Activated CD4-positive, alpha-beta T cell treated with anti-CD3 and anti-CD28 coated beads, Interleukin-2, amount 10 ng/mL, durations not matched to agents 24 days and 14 days (primary cell): ENCODE measurements at regions of chr2 and their contacts with region 1.

Region 1: GRCh38 chr2:98465456-98466226 is 21.0 kb downstream of the INPP4A start:
- DNase-seq: peak; percentile 93
- H3K4me3 Mint-ChIP-seq: peak overlapping the region; percentile 71
- H3K27ac Mint-ChIP-seq: peak overlapping the region; percentile 89
- H3K4me1 Mint-ChIP-seq: peaks cover 76% of the 10 kb centered on the region
- H3K27me3 Mint-ChIP-seq: no peaks in the 10 kb centered on the region

Region 2: GRCh38 chr2:98269274-98269673 is 196.4 kb before region 1 on chr2:
- intact Hi-C with region 1: no loop called
- DNase-seq: peak; percentile 72
- H3K4me3 Mint-ChIP-seq: no peak overlapping the region
- H3K27ac Mint-ChIP-seq: no peak overlapping the region
- H3K4me1 Mint-ChIP-seq: no peaks in the 10 kb centered on the region
- H3K27me3 Mint-ChIP-seq: peaks cover 6% of the 10 kb centered on the region

Region 3: DNA sequence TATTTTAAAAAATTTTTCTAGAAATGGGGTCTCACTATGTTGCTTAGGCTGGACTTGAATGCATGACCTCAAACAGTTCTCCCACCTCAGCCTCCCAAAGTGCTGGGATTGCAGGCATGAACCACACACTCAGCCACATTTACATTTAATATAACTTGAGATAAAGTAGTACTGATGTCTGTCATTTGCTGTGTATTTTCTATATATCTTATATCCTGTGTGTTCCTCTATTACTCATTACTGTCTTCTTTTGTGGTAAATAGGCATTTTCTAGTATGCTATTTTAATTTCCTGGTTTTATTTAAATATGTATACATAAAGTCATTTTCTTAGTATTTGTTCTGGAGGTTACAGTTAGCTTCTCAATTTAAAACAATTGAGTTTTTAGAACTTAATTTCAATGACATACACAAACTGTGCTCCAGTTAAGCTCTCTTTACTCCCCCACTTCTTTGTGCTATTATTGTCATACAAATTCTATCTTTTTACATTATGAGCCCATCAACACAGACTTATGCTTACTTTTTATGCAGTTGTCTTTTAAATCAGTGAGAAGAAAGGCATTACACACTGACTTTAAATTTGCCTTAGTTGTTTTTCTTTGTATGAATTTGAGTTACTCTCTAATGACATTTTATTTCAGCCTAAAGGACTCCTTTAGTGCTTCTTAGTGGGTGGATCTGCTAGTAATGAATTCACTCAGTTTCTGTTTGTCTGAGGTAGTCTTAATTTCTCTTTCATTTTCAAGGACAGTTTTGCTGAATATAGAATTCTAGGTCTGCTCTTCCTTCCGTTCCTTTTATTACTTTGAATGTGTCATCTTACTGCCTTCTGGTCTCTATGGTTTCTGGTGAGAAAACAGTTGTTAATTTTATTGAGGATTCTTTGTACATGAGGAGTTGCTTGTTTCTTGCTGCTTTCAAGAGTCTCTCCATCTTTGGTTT is 27.2 kb before region 1 on chr2:
- intact Hi-C with region 1: loop called (anchors 2 kb)
- DNase-seq: peak; percentile 64
- H3K4me3 Mint-ChIP-seq: peak overlapping the region; percentile 58
- H3K27ac Mint-ChIP-seq: peak overlapping the region; percentile 87
- H3K4me1 Mint-ChIP-seq: peaks cover 17% of the 10 kb centered on the region
- H3K27me3 Mint-ChIP-seq: no peaks in the 10 kb centered on the region

Region 4: GRCh38 chr2:98444436-98445176 is 21.0 kb before region 1 on chr2 and contains the start of gene INPP4A:
- intact Hi-C with region 1: loop called (anchors 1 kb)
- DNase-seq: peak; percentile 93
- H3K4me3 Mint-ChIP-seq: peak within 1 kb of the TSS; percentile 89
- H3K27ac Mint-ChIP-seq: peak within 1 kb of the TSS; percentile 91
- H3K4me1 Mint-ChIP-seq: peaks cover 37% of the 10 kb centered on the region
- H3K27me3 Mint-ChIP-seq: no peaks in the 10 kb centered on the region
- total RNA-seq, gene INPP4A: 40.2 and 45.0 TPM in 2 replicates

Region 5: DNA sequence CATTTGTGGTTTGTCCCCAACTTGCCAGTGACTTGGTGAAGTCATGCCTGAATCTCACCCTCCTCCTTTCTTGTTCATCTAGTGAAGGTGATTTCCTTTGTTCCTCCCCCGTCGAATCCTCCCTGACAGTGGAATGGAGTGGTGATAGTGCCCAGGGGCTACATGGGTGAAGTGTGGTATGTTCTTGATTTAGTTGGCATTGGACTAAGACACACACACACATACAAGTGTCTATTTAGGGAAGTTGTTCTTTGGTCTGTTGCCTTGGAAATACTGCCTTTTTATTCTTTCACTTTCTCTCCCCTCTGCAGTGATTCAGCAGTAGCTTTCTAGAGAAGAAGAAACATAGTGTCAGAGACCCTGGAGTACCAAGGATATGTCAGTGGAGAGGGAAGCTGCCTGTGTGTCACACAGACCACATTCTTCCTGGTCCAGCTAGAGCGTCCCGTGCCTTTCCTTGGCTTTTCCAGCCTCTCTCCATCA is 10.1 kb before region 1 on chr2:
- intact Hi-C with region 1: loop called (anchors 1 kb)
- DNase-seq: peak; percentile 88
- H3K4me3 Mint-ChIP-seq: peak overlapping the region; percentile 76
- H3K27ac Mint-ChIP-seq: peak overlapping the region; percentile 95
- H3K4me1 Mint-ChIP-seq: peaks cover 88% of the 10 kb centered on the region
- H3K27me3 Mint-ChIP-seq: no peaks in the 10 kb centered on the region

Region 6: GRCh38 chr2:98479959-98480524 is 14.4 kb after region 1 on chr2:
- intact Hi-C with region 1: loop called (anchors 2 kb)
- DNase-seq: peak; percentile 79
- H3K4me3 Mint-ChIP-seq: peak overlapping the region; percentile 61
- H3K27ac Mint-ChIP-seq: peak overlapping the region; percentile 88
- H3K4me1 Mint-ChIP-seq: peaks cover 99% of the 10 kb centered on the region
- H3K27me3 Mint-ChIP-seq: no peaks in the 10 kb centered on the region

Region 7: DNA sequence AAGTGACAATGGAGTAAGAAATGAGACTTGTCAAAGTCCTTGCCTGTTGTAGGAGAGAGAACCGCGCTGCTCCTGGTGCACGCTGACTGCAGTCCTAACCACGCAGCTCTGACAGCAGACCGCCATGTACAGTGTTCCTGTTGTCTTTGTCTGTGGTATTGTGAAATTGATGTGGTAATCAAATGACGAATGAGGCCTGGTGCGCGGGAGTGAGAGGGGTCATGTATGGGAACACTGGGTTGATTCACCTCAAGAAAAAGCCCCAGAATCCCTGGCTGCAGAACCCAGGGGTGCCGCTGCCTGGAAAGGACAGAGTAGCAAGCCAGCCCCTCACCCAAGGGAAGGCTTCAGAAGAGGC is 43.0 kb after region 1 on chr2:
- intact Hi-C with region 1: loop called (anchors 2 kb)
- DNase-seq: peak; percentile 82
- H3K4me3 Mint-ChIP-seq: peak overlapping the region; percentile 73
- H3K27ac Mint-ChIP-seq: peak overlapping the region; percentile 91
- H3K4me1 Mint-ChIP-seq: peaks cover 69% of the 10 kb centered on the region
- H3K27me3 Mint-ChIP-seq: no peaks in the 10 kb centered on the region

Region 8: GRCh38 chr2:98552499-98553179 is 87.0 kb after region 1 on chr2:
- intact Hi-C with region 1: loop called (anchors 5 kb)
- DNase-seq: no peak
- H3K4me3 Mint-ChIP-seq: no peak overlapping the region
- H3K27ac Mint-ChIP-seq: peak overlapping the region; percentile 54
- H3K4me1 Mint-ChIP-seq: peaks cover 68% of the 10 kb centered on the region
- H3K27me3 Mint-ChIP-seq: no peaks in the 10 kb centered on the region